Natural killer cell (primary cell): ENCODE measurements at regions of chr20 and their contacts with region 1.

Region 1: GRCh38 chr20:48787861-48788375 is 39.9 kb downstream of the PREX1 start:
- DNase-seq: no peak
- ATAC-seq: peak in 1 of 3 donors; percentile 37
- H3K4me3 ChIP-seq: no peak overlapping the region
- H3K4me3 Mint-ChIP-seq: peak overlapping the region; percentile 70
- H3K27ac ChIP-seq: peak overlapping the region; percentile 65
- H3K27ac Mint-ChIP-seq: no peak overlapping the region
- H3K4me1 ChIP-seq: peaks cover 91% of the 10 kb centered on the region
- H3K4me1 Mint-ChIP-seq: peaks cover 0 to 85% of the 10 kb centered on the region in 2 donors
- H3K27me3 ChIP-seq: no peaks in the 10 kb centered on the region
- H3K27me3 Mint-ChIP-seq: no peaks in the 10 kb centered on the region
- CTCF ChIP-seq: no peak

Region 2: DNA sequence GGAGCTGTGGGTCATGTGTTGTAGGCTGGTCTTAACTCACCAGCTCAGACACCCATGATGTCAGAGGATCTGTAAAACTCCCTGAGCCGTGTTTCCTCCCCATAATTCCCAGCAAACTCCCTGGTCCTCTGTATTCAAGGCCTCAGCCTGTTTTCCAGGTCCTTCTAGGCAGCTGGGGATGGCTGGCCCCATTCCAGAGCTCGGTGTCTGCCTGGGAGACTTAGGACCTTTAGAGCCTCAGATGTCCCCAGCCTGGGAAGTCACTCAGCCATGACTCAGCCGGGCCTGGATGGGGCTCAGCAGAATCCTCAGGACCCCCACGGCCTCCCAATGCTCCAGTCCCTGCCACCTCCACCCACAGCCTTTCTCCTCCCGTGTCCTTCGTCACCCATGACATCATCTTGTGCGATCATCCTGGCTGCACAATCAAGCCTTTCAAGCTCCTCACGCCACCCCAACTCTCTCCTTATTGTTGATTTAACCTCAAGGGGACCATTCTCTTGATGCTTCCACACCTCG is 527.6 kb before region 1 on chr20:
- intact Hi-C with region 1: no loop called
- DNase-seq: no peak
- ATAC-seq: no peak
- H3K4me3 ChIP-seq: no peak overlapping the region
- H3K4me3 Mint-ChIP-seq: no peak overlapping the region
- H3K27ac ChIP-seq: no peak overlapping the region
- H3K27ac Mint-ChIP-seq: no peak overlapping the region
- H3K4me1 ChIP-seq: no peaks in the 10 kb centered on the region
- H3K4me1 Mint-ChIP-seq: no peaks in the 10 kb centered on the region
- H3K27me3 ChIP-seq: no peaks in the 10 kb centered on the region
- H3K27me3 Mint-ChIP-seq: peaks cover 12 to 39% of the 10 kb centered on the region in 2 donors
- CTCF ChIP-seq: no peak

Region 3: GRCh38 chr20:48657475-48658470 is 130.1 kb before region 1 on chr20:
- intact Hi-C with region 1: loop called (anchors 5 kb)
- DNase-seq: peak; percentile 61 to 89
- ATAC-seq: peak; percentile 89 to 97 (median 90)
- H3K4me3 ChIP-seq: no peak overlapping the region
- H3K4me3 Mint-ChIP-seq: peak overlapping the region; percentile 22
- H3K27ac ChIP-seq: no peak overlapping the region
- H3K27ac Mint-ChIP-seq: peak overlapping the region; percentile 79 to 83
- H3K4me1 ChIP-seq: peaks cover 18% of the 10 kb centered on the region
- H3K4me1 Mint-ChIP-seq: peaks cover 44 to 59% of the 10 kb centered on the region in 2 donors
- H3K27me3 ChIP-seq: no peaks in the 10 kb centered on the region
- H3K27me3 Mint-ChIP-seq: no peaks in the 10 kb centered on the region
- CTCF ChIP-seq: peak; percentile 95

Region 4: GRCh38 chr20:48722737-48723191 is 65.2 kb before region 1 on chr20:
- intact Hi-C with region 1: no loop called
- DNase-seq: peak; percentile 23 to 59
- ATAC-seq: peak; percentile 33 to 60 (median 35)
- H3K4me3 ChIP-seq: no peak overlapping the region
- H3K4me3 Mint-ChIP-seq: peak overlapping the region; percentile 70
- H3K27ac ChIP-seq: peak overlapping the region; percentile 74
- H3K27ac Mint-ChIP-seq: peak overlapping the region; percentile 91 to 95
- H3K4me1 ChIP-seq: peaks cover 90% of the 10 kb centered on the region
- H3K4me1 Mint-ChIP-seq: peaks cover 92 to 99% of the 10 kb centered on the region in 2 donors
- H3K27me3 ChIP-seq: no peaks in the 10 kb centered on the region
- H3K27me3 Mint-ChIP-seq: no peaks in the 10 kb centered on the region
- CTCF ChIP-seq: no peak

Region 5: GRCh38 chr20:48738399-48739304 is 49.3 kb before region 1 on chr20:
- intact Hi-C with region 1: no loop called
- DNase-seq: peak; percentile 63 to 64
- ATAC-seq: peak; percentile 81 to 86 (median 85)
- H3K4me3 ChIP-seq: no peak overlapping the region
- H3K4me3 Mint-ChIP-seq: peak overlapping the region; percentile 83
- H3K27ac ChIP-seq: peak overlapping the region; percentile 13
- H3K27ac Mint-ChIP-seq: peak overlapping the region; percentile 89 to 91
- H3K4me1 ChIP-seq: peaks cover 61% of the 10 kb centered on the region
- H3K4me1 Mint-ChIP-seq: peaks cover 69 to 73% of the 10 kb centered on the region in 2 donors
- H3K27me3 ChIP-seq: no peaks in the 10 kb centered on the region
- H3K27me3 Mint-ChIP-seq: no peaks in the 10 kb centered on the region
- CTCF ChIP-seq: no peak

Region 6: GRCh38 chr20:48769069-48769879 is 18.6 kb before region 1 on chr20:
- intact Hi-C with region 1: loop called (anchors 2 kb)
- DNase-seq: peak; percentile 84 to 94
- ATAC-seq: peak; percentile 80 to 93 (median 88)
- H3K4me3 ChIP-seq: no peak overlapping the region
- H3K4me3 Mint-ChIP-seq: peak overlapping the region; percentile 55
- H3K27ac ChIP-seq: peak overlapping the region; percentile 86
- H3K27ac Mint-ChIP-seq: no peak overlapping the region
- H3K4me1 ChIP-seq: peaks cover 97% of the 10 kb centered on the region
- H3K4me1 Mint-ChIP-seq: peaks cover 92 to 93% of the 10 kb centered on the region in 2 donors
- H3K27me3 ChIP-seq: no peaks in the 10 kb centered on the region
- H3K27me3 Mint-ChIP-seq: no peaks in the 10 kb centered on the region
- CTCF ChIP-seq: no peak

Region 7: GRCh38 chr20:48805286-48805685 is 17.4 kb after region 1 on chr20:
- intact Hi-C with region 1: loop called (anchors 2 kb)
- DNase-seq: no peak
- ATAC-seq: peak in 2 of 3 donors; percentile 60 to 62
- H3K4me3 ChIP-seq: no peak overlapping the region
- H3K4me3 Mint-ChIP-seq: peak overlapping the region; percentile 67
- H3K27ac ChIP-seq: peak overlapping the region; percentile 27
- H3K27ac Mint-ChIP-seq: peak overlapping the region; percentile 87 to 92
- H3K4me1 ChIP-seq: peaks cover 91% of the 10 kb centered on the region
- H3K4me1 Mint-ChIP-seq: peaks cover 86 to 100% of the 10 kb centered on the region in 2 donors
- H3K27me3 ChIP-seq: no peaks in the 10 kb centered on the region
- H3K27me3 Mint-ChIP-seq: no peaks in the 10 kb centered on the region
- CTCF ChIP-seq: no peak

Region 8: GRCh38 chr20:48818407-48818987 is 30.6 kb after region 1 on chr20:
- intact Hi-C with region 1: loop called (anchors 2 kb)
- DNase-seq: peak in 1 of 2 donors; percentile 68
- ATAC-seq: peak; percentile 10 to 24 (median 17)
- H3K4me3 ChIP-seq: no peak overlapping the region
- H3K4me3 Mint-ChIP-seq: peak overlapping the region; percentile 99
- H3K27ac ChIP-seq: peak overlapping the region; percentile 75
- H3K27ac Mint-ChIP-seq: no peak overlapping the region
- H3K4me1 ChIP-seq: peaks cover 93% of the 10 kb centered on the region
- H3K4me1 Mint-ChIP-seq: peaks cover 73% of the 10 kb centered on the region in 2 donors
- H3K27me3 ChIP-seq: no peaks in the 10 kb centered on the region
- H3K27me3 Mint-ChIP-seq: no peaks in the 10 kb centered on the region
- CTCF ChIP-seq: no peak

Region 9: GRCh38 chr20:49179368-49180277 is 391.7 kb after region 1 on chr20:
- intact Hi-C with region 1: no loop called
- DNase-seq: no peak
- ATAC-seq: peak in 1 of 3 donors; percentile 50
- H3K4me3 ChIP-seq: no peak overlapping the region
- H3K4me3 Mint-ChIP-seq: no peak overlapping the region
- H3K27ac ChIP-seq: no peak overlapping the region
- H3K27ac Mint-ChIP-seq: peak overlapping the region; percentile 37 to 69
- H3K4me1 ChIP-seq: no peaks in the 10 kb centered on the region
- H3K4me1 Mint-ChIP-seq: peaks cover 42 to 52% of the 10 kb centered on the region in 2 donors
- H3K27me3 ChIP-seq: no peaks in the 10 kb centered on the region
- H3K27me3 Mint-ChIP-seq: no peaks in the 10 kb centered on the region
- CTCF ChIP-seq: no peak